Panc1 (cell line): ENCODE measurements at regions of chr2 and their contacts with region 1.

Region 1: DNA sequence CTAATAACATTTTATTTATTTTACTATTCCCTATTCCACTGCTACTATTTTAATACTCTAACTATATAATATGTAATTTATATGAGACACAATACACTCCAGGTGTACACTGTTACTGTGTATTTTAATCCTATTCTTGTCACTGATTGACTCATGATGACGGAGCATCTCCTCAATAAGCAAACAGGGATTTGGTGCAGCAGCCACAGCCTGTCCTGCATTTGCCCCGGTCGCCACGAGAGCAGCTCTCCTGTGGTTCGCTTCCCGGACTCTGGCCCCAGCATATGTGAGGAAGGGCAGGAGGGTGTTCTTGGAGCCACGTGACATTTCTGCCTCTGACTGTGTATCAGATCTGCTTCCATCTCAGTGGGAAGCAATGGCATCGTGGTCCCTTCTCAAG is 74.1 kb upstream of the PXDN start:
- DNase-seq: no peak
- ATAC-seq: no peak
- H3K4me3 ChIP-seq: no peak overlapping the region
- H3K27ac ChIP-seq: 0 out of 2 replicates have a peak overlapping the region, but pooled peaks have one; percentile 17
- H3K4me1 ChIP-seq: peaks cover 12% of the 10 kb centered on the region
- H3K27me3 ChIP-seq: no peaks in the 10 kb centered on the region
- CTCF ChIP-seq: no peak

Region 2: DNA sequence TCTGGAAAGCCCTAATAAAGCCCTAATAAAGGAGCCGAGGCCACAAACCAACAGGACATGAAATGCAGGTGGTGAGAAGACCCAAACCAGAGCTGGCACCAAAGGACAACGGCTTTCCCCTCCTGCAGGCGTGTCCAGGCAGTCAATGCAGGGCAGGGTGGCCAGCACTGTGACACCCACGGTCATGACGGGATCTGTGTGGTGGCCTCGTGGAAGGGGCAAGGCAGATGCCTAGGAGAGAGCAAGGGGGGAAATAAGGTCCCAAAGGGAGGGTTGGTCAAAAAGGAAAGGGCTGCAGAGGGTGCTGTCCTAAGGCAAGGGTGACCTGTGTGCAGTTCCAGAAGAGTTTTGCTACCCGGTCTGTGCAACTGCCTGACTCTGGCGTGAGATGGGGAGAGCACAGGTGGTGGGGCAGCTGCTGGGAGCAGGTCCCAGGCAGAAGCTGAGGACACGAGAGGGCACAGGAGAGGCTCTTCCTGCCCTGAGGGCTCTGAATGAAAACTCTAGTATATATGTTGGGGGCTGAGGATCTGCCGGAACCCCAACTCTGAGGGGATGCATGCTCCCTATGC is 248.4 kb before region 1 on chr2:
- CTCF ChIA-PET with region 1: no interaction called
- POLR2A ChIA-PET with region 1: interaction called, 12 read pairs
- in situ Hi-C with region 1: no loop called
- intact Hi-C with region 1: no loop called
- DNase-seq: no peak
- ATAC-seq: no peak
- H3K4me3 ChIP-seq: no peak overlapping the region
- H3K27ac ChIP-seq: no peak overlapping the region
- H3K4me1 ChIP-seq: no peaks in the 10 kb centered on the region
- H3K27me3 ChIP-seq: no peaks in the 10 kb centered on the region
- CTCF ChIP-seq: no peak